Ascending aorta (tissue), 2 donors: ENCODE measurements at regions of chr3 and their contacts with region 1.

Region 1: DNA sequence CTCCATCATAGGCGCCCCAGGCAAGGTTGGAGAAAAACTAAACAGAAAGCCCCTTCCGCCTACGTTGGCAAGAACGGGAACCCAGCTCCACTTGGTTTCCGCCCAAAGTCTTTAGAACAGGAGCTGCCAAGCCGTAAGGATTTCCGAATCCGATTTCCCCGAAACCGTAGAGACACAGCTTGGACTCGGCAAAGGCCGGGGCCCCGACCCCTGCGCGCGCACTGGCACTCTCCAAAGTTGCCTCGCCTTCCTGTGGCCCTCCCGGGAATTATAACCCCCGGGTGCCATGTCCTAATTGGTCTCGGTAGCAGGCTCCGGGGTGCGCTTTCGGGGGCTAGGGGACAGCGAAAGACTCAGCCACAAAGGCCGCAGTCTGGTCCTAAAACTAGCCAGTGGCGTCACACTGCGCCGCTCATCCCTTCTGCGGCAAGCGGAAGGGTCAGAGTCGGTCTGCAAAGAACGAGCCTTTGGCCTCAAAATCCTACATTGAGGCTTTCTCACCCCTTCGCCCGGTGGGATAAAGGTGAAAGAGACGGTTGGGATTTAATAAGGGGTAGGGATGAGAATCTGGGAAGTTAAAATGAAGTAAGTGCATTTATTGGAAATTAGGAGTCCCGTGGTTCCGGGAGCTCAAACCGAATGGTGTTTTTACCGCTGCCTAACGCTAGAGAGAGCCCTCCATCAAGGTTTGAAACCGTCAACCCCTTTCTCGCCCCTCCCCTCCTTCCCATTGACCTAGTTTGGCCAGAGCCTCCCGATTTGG is 6.8 kb downstream of the BCL6 start:
- DNase-seq: peak; percentile 54 to 97
- H3K4me3 ChIP-seq: peak overlapping the region; percentile 73 to 75
- H3K27ac ChIP-seq: peak overlapping the region; percentile 98 to 99
- H3K4me1 ChIP-seq: peaks cover 6 to 27% of the 10 kb centered on the region in 2 donors
- H3K27me3 ChIP-seq: no peaks in the 10 kb centered on the region
- CTCF ChIP-seq: peak; percentile 66 to 87 (median 75)

Region 2: DNA sequence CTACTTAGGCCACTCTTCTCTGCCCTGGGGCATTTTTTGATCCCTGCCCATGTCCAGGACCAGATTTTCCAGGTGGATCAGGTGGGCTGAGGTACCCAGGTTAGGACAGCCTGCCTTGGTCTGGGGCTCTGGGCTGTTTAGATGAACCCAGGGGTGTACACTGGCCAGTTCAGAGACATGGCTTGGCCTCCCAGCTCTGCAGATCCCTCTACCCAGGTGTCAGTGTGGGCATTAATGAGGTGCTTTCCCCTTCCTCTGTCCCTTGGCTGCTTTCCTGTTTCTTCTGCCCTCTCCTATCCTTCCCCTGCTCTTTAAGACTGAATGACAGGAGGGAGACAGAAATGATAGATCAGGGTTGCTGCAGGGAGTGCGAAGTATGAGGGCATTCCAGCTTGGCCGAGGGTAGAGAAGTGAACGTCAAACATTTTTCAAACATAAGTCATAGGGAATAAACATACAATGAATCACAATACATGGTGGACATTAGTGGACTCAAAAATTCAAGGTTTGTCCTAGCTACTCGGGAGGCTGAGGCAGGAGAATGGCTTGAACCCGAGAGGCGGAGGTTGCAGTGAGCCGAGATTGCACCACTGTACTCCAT is 510.8 kb before region 1 on chr3:
- intact Hi-C with region 1: no loop called
- DNase-seq: no peak
- H3K4me3 ChIP-seq: no peak overlapping the region
- H3K27ac ChIP-seq: no peak overlapping the region
- H3K4me1 ChIP-seq: peaks cover 0 to 11% of the 10 kb centered on the region in 2 donors
- H3K27me3 ChIP-seq: no peaks in the 10 kb centered on the region
- CTCF ChIP-seq: no peak

Region 3: GRCh38 chr3:188326111-188326510 is 587.6 kb after region 1 on chr3:
- intact Hi-C with region 1: loop called (anchors 5 kb)
- DNase-seq: peak in 1 of 2 donors; percentile 72
- H3K4me3 ChIP-seq: peak overlapping the region in 1 of 2 donors; percentile 29
- H3K27ac ChIP-seq: peak overlapping the region; percentile 62 to 73
- H3K4me1 ChIP-seq: peaks cover 11 to 53% of the 10 kb centered on the region in 2 donors
- H3K27me3 ChIP-seq: no peaks in the 10 kb centered on the region
- CTCF ChIP-seq: no peak

Region 4: DNA sequence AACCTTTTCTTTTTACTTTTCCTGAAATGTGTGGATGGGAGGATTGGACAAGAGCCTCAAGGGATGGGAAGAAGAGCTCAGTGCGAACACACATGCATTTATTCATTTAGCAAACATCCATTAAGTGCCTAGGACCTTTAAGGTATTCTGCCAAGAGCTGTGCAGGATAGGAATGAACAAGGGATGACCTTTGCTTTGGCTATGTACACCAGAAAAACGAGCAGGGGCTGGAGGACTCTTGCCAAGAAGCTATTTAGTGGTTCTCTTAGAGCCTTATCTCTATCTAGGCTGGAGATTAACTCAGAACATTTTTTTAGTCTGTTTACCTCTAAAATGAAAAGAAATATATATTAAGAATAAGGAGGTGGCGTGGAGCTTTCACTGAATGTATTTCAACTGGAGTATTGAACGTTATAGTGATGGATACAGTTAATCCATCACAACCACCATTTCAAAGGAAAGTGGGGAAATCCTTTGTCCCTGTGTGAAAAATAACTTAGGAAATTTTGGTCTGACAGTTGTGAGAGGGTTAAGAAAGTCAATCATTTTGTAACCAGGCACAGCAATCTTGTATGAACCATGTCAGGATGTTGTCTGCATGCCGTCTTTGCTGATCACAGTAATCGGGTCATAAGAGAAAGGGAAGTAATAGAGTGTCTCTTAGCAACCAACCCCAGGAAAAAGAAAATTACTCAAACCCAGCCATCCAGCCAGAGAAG is 694.4 kb after region 1 on chr3:
- intact Hi-C with region 1: loop called (anchors 5 kb)
- DNase-seq: no peak
- H3K4me3 ChIP-seq: no peak overlapping the region
- H3K27ac ChIP-seq: peak overlapping the region; percentile 55 to 79
- H3K4me1 ChIP-seq: peaks cover 9 to 42% of the 10 kb centered on the region in 2 donors
- H3K27me3 ChIP-seq: no peaks in the 10 kb centered on the region
- CTCF ChIP-seq: no peak

Region 5: DNA sequence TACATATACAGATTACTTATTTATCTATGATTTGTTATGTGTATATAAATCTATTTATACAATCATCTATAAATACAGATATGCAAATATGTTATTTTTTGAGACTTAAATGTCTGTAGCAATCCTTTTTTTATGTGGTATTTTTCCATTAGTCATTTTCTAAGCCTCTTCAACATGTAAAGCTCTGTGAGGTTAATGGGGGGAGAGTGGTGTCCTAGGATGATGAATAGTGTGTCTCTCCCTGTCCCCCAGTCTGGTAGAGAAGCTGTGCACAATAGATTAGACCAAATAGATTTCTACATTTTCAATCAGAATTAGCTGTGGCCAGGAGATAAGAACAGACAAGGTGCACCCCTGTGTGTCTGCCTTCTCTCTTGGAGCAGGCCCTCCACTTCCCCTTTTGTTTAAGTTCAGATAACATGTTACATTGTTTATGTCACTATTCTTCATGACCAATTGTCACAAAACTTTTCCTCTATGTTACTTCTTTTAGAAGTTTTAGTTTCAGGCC is 869.3 kb after region 1 on chr3:
- intact Hi-C with region 1: loop called (anchors 5 kb)
- DNase-seq: no peak
- H3K4me3 ChIP-seq: no peak overlapping the region
- H3K27ac ChIP-seq: peak overlapping the region; percentile 44 to 71
- H3K4me1 ChIP-seq: peaks cover 6 to 35% of the 10 kb centered on the region in 2 donors
- H3K27me3 ChIP-seq: no peaks in the 10 kb centered on the region
- CTCF ChIP-seq: no peak

Region 6: DNA sequence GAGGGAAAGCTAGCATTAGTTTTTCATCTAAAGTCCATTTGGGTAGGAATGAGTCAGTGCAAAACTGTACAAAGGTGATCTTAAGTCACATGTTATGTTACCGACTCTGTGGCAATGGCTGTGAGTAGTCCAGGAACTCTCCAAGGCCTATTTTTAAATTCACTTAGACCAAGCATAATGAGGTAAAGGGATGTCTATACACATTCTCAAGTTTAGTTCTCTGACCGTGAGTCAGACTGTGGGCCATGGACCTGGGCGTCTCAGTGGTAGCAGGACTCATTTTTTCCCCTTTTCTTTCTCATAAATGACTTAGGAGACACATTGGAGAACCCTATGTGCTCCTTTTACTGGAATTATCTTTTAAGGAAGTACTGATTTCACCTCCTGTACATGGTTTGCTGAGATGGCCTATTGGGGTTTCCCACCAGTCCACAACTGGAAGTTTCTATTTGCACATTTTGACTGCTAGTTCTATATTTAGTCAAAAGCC is 944.6 kb after region 1 on chr3:
- intact Hi-C with region 1: loop called (anchors 5 kb)
- DNase-seq: peak; percentile 17 to 91
- H3K4me3 ChIP-seq: no peak overlapping the region
- H3K27ac ChIP-seq: peak overlapping the region; percentile 68 to 83
- H3K4me1 ChIP-seq: peaks cover 17 to 48% of the 10 kb centered on the region in 2 donors
- H3K27me3 ChIP-seq: no peaks in the 10 kb centered on the region
- CTCF ChIP-seq: no peak

Region 7: GRCh38 chr3:188954590-188955208 is 1216.2 kb after region 1 on chr3:
- intact Hi-C with region 1: loop called (anchors 1 kb)
- DNase-seq: peak; percentile 36 to 92
- H3K4me3 ChIP-seq: no peak overlapping the region
- H3K27ac ChIP-seq: peak overlapping the region in 1 of 2 donors; percentile 36
- H3K4me1 ChIP-seq: peaks cover 12 to 24% of the 10 kb centered on the region in 2 donors
- H3K27me3 ChIP-seq: no peaks in the 10 kb centered on the region
- CTCF ChIP-seq: peak; percentile 86 to 94 (median 92)